ENCODE measurements at regions of chr6 and their contacts with region 1.

Region 1: DNA sequence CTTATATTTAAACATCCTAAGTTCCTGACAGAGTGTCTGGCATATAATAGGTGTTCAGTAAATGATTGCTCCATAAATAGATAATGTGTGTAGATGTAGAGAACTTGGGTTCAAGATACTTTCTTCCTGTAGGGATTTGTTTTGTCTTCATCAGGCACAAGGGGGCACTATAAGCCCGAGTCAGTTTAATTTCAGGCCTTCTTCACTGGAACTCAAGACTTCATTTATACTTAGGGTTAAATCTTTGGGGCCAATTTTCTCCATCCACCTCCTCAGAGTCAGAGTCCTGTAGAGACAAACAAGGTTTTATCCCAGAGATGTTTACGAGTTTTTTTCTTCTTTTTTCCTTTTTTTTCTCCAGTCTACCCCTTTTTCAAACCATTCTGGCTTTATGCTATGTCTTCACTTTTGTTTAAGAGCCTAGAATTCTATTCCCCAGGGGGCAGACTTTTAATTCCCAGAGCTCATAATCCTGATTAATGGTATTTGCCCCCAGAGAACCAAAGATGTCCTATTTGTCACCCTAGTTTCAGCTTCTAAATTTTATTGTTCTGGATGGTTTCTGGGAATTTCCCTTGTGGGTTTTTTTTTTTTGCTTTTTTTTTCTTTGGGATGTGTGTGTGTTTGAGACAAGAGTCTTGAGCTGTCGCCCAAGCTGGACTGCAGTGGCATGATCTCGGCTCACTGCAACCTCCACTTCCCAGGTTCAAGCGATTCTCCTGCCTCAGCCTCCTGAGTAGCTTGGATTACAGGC is 88.4 kb downstream of the HFE start:
- DNase-seq: peak in 7 of 9 donors; percentile 57 to 75 (median 66)
- ATAC-seq: peak; percentile 32
- H3K4me3 ChIP-seq: no peak overlapping the region
- H3K4me3 Mint-ChIP-seq: peak overlapping the region in 7 of 10 donors; percentile 15 to 63 (median 43)
- H3K27ac ChIP-seq: no peak overlapping the region
- H3K27ac Mint-ChIP-seq: peak overlapping the region; percentile 32 to 89 (median 76)
- H3K4me1 ChIP-seq: peaks cover 16 to 19% of the 10 kb centered on the region in 2 donors
- H3K4me1 Mint-ChIP-seq: peaks cover 20 to 51% (median 39%) of the 10 kb centered on the region in 7 donors
- H3K27me3 ChIP-seq: no peaks in the 10 kb centered on the region
- H3K27me3 Mint-ChIP-seq: no peaks in the 10 kb centered on the region

Region 2: GRCh38 chr6:26045065-26045927 is 130.3 kb before region 1 on chr6:
- CTCF ChIA-PET with region 1: no interaction called
- POLR2A ChIA-PET with region 1: interaction called, 25 read pairs
- intact Hi-C with region 1: no loop called
- DNase-seq: peak; percentile 39 to 93 (median 89)
- ATAC-seq: peak; percentile 68
- H3K4me3 ChIP-seq: peak overlapping the region; percentile 91
- H3K4me3 Mint-ChIP-seq: peak overlapping the region; percentile 87 to 98 (median 94)
- H3K27ac ChIP-seq: peak overlapping the region; percentile 90
- H3K27ac Mint-ChIP-seq: peak overlapping the region; percentile 80 to 98 (median 95)
- H3K4me1 ChIP-seq: peaks cover 7 to 19% of the 10 kb centered on the region in 2 donors
- H3K4me1 Mint-ChIP-seq: peaks cover 8 to 51% (median 20%) of the 10 kb centered on the region in 7 donors
- H3K27me3 ChIP-seq: no peaks in the 10 kb centered on the region
- H3K27me3 Mint-ChIP-seq: peaks cover 0 to 3% (median 0%) of the 10 kb centered on the region in 5 donors

Region 3: GRCh38 chr6:26165261-26165790 is 10.3 kb before region 1 on chr6:
- CTCF ChIA-PET with region 1: interaction called, 8 read pairs
- POLR2A ChIA-PET with region 1: interaction called, 743 read pairs
- intact Hi-C with region 1: no loop called
- DNase-seq: peak in 1 of 9 donors; percentile 21
- ATAC-seq: no peak
- H3K4me3 ChIP-seq: no peak overlapping the region
- H3K4me3 Mint-ChIP-seq: peak overlapping the region; percentile 33 to 72 (median 58)
- H3K27ac ChIP-seq: peak overlapping the region; percentile 16
- H3K27ac Mint-ChIP-seq: peak overlapping the region; percentile 80 to 91 (median 83)
- H3K4me1 ChIP-seq: peaks cover 14 to 40% of the 10 kb centered on the region in 2 donors
- H3K4me1 Mint-ChIP-seq: peaks cover 34 to 83% (median 57%) of the 10 kb centered on the region in 7 donors
- H3K27me3 ChIP-seq: no peaks in the 10 kb centered on the region
- H3K27me3 Mint-ChIP-seq: no peaks in the 10 kb centered on the region

Region 4: GRCh38 chr6:26234421-26235296 is 59.1 kb after region 1 on chr6:
- CTCF ChIA-PET with region 1: interaction called, 4 read pairs
- POLR2A ChIA-PET with region 1: interaction called, 150 read pairs
- intact Hi-C with region 1: loop called (anchors 1 kb)
- DNase-seq: peak; percentile 48 to 94 (median 85)
- ATAC-seq: peak; percentile 80
- H3K4me3 ChIP-seq: peak overlapping the region; percentile 93
- H3K4me3 Mint-ChIP-seq: peak overlapping the region; percentile 87 to 99 (median 94)
- H3K27ac ChIP-seq: peak overlapping the region; percentile 87
- H3K27ac Mint-ChIP-seq: peak overlapping the region; percentile 93 to 100 (median 98)
- H3K4me1 ChIP-seq: peaks cover under 1 to 18% of the 10 kb centered on the region in 2 donors
- H3K4me1 Mint-ChIP-seq: peaks cover 18 to 52% (median 38%) of the 10 kb centered on the region in 7 donors
- H3K27me3 ChIP-seq: no peaks in the 10 kb centered on the region
- H3K27me3 Mint-ChIP-seq: peaks cover 0 to 15% (median 0%) of the 10 kb centered on the region in 5 donors

Region 5: DNA sequence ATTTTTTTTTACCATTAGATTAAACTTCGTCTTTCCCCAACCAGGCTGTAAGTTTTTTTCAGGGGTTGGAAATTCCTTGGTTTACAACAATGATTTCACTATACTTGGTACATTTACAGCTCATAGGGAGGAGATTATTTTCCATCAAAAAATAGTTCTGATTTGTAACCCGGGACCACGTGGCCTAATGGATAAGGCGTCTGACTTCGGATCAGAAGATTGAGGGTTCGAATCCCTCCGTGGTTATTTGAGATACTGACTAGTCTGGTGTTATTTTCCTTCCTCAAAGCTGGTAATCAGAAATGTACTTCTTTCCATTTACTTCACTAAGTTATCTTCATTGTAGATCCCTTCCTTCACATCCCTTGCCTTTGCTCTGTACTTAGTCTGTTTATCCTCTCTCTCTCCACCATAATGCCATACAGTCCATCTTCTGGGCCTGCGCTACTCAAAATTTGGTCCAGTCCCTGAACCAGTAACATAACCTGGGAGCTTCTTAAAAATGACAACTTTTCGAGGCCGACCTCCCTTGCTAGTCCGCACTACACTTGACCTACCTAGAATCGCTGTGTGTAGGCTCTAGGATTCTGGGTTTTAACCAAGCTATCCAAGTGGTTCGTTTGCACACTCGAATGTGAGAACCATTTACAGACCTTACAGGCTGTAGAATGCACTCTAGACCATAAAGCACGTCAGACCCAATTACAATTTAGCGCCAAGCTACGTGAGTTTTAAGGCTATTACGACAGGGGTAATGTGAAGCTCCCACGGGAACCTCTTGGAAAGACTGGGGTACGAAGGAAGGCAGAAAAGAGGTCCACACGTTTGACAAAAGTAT is 147.3 kb after region 1 on chr6:
- CTCF ChIA-PET with region 1: no interaction called
- POLR2A ChIA-PET with region 1: interaction called, 25 read pairs
- intact Hi-C with region 1: loop called in 1 of 2 experiments (anchors 2 kb)
- DNase-seq: peak in 8 of 9 donors; percentile 67 to 85 (median 79)
- ATAC-seq: peak; percentile 72
- H3K4me3 ChIP-seq: peak overlapping the region; percentile 82
- H3K4me3 Mint-ChIP-seq: peak overlapping the region; percentile 64 to 92 (median 88)
- H3K27ac ChIP-seq: peak overlapping the region; percentile 60
- H3K27ac Mint-ChIP-seq: peak overlapping the region; percentile 44 to 93 (median 89)
- H3K4me1 ChIP-seq: peaks cover 5 to 8% of the 10 kb centered on the region in 2 donors
- H3K4me1 Mint-ChIP-seq: peaks cover 2 to 58% (median 36%) of the 10 kb centered on the region in 7 donors
- H3K27me3 ChIP-seq: no peaks in the 10 kb centered on the region
- H3K27me3 Mint-ChIP-seq: peaks cover 5 to 21% (median 17%) of the 10 kb centered on the region in 5 donors

Region 6: DNA sequence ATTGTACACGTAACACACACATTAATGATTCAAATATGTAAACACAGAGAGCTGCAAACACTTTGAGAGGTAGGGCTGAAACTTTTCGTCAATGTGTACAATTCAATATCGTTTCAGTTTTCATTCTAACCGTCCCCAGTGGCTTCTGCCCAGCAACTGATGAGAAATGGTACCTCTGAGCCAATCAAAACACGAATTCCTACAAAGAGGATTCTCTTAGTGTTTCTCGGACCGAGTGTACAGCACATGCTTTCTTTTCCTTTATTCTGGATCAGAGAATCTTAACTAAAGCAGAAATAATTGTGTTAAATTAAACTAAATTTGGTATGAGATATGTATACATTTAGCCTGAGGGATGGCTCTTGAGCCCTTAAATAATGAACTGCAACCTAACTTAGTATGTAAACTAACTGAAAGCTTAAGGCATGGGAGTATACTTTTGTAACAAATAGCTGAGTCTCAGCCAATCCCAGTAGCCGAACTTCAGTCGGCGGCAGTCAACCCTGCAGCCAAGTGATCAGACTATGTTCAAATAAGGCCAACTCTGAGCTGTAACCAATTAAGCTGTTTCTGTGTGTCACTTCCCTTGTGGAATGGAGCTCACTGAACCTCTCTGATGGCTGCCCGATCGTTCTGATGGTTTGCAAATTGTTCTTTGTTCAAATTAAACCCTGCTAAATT is 298.3 kb after region 1 on chr6:
- CTCF ChIA-PET with region 1: no interaction called
- POLR2A ChIA-PET with region 1: interaction called, 12 read pairs
- intact Hi-C with region 1: loop called in 1 of 2 experiments (anchors 5 kb)
- DNase-seq: peak; percentile 37 to 94 (median 90)
- ATAC-seq: peak; percentile 96
- H3K4me3 ChIP-seq: peak overlapping the region; percentile 67
- H3K4me3 Mint-ChIP-seq: peak overlapping the region; percentile 88 to 100 (median 97)
- H3K27ac ChIP-seq: peak overlapping the region; percentile 91
- H3K27ac Mint-ChIP-seq: peak overlapping the region; percentile 98 to 100 (median 100)
- H3K4me1 ChIP-seq: peaks cover 33% of the 10 kb centered on the region in 2 donors
- H3K4me1 Mint-ChIP-seq: peaks cover 41 to 72% (median 64%) of the 10 kb centered on the region in 7 donors
- H3K27me3 ChIP-seq: no peaks in the 10 kb centered on the region
- H3K27me3 Mint-ChIP-seq: no peaks in the 10 kb centered on the region

Region 7: GRCh38 chr6:26596579-26597388 is 421.2 kb after region 1 on chr6 and contains the start of gene ABT1:
- CTCF ChIA-PET with region 1: interaction called, 6 read pairs
- POLR2A ChIA-PET with region 1: interaction called, 5 read pairs
- intact Hi-C with region 1: loop called (anchors 1 kb)
- DNase-seq: peak; percentile 87 to 96 (median 95)
- ATAC-seq: peak; percentile 95
- H3K4me3 ChIP-seq: peak within 1 kb of the TSS; percentile 81
- H3K4me3 Mint-ChIP-seq: no peak within 1 kb of the TSS
- H3K27ac ChIP-seq: peak within 1 kb of the TSS; percentile 89
- H3K27ac Mint-ChIP-seq: peak within 1 kb of the TSS in 1 of 9 donors; percentile 92
- H3K4me1 ChIP-seq: peaks cover 17 to 22% of the 10 kb centered on the region in 2 donors
- H3K4me1 Mint-ChIP-seq: peaks cover 5 to 20% (median 10%) of the 10 kb centered on the region in 7 donors
- H3K27me3 ChIP-seq: peaks cover 8 to 14% of the 10 kb centered on the region in 2 donors
- H3K27me3 Mint-ChIP-seq: peaks cover 3 to 28% (median 16%) of the 10 kb centered on the region in 5 donors
- total RNA-seq, gene ABT1: 23.3 to 37.5 (median 35.0) TPM